H1 (cell line): ENCODE measurements at regions of chr7 and their contacts with region 1.

Region 1: GRCh38 chr7:101066141-101066832 is 19.0 kb upstream of the TRIM56 start:
- DNase-seq: no peak
- H3K4me3 ChIP-seq: no peak overlapping the region
- H3K27ac ChIP-seq: no peak overlapping the region
- H3K4me1 ChIP-seq: peaks cover 0 to 11% (median 8%) of the 10 kb centered on the region in 4 experiments; a peak in 5 of 7 replicates
- H3K27me3 ChIP-seq: no peaks in the 10 kb centered on the region
- CTCF ChIP-seq: no peak
- EP300 ChIP-seq: no peak
- POLR2A ChIP-seq: no peak
- RAD21 ChIP-seq: no peak

Region 2: DNA sequence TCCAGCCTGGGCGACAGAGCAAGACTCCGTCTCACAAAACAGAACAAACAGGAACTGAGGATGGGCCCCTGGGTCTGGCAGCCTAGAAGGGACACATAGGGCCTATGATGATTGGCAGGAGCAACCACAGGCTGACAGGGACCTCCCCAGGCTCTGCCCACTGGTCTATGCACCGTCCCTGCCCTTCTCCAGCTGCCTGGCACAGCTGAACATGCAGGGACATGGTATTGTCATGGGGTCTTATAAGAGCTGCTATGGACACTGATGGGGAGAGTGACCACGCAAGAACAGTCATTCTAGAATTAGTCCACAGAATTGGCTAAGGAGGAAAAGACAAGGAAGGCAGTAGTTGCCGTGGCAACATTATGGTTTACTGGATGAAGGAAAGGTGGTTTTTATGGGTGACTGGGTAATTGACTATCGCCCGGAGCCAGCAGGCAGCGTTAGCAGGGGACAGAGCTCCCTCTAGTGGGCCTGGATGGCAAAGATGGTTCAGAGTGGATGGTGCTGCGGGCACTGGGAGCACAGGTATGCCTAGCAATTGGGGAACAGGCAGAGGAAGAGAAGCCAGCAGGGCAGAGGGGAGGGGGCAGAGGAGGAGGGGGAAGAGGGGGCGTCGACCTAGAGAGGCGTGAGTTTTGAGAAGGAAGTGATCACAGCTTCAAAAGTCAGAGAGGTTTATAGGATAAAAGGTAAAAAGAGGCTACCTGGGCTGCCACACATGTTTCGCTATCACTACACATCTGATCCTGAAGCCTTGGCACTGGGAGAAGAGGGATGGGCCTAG is 11.2 kb after region 1 on chr7:
- CTCF ChIA-PET with region 1: interaction called, 11 read pairs
- POLR2A ChIA-PET with region 1: no interaction called
- DNase-seq: peak; percentile 89 to 98
- H3K4me3 ChIP-seq: no peak overlapping the region
- H3K27ac ChIP-seq: no peak overlapping the region
- H3K4me1 ChIP-seq: no peaks in the 10 kb centered on the region
- H3K27me3 ChIP-seq: no peaks in the 10 kb centered on the region
- CTCF ChIP-seq: peak; percentile 94 to 98 (median 96)
- EP300 ChIP-seq: peak in 1 of 2 experiments; percentile 54; a peak in 1 of 3 replicates
- POLR2A ChIP-seq: no peak
- RAD21 ChIP-seq: peak; percentile 97

Region 3: DNA sequence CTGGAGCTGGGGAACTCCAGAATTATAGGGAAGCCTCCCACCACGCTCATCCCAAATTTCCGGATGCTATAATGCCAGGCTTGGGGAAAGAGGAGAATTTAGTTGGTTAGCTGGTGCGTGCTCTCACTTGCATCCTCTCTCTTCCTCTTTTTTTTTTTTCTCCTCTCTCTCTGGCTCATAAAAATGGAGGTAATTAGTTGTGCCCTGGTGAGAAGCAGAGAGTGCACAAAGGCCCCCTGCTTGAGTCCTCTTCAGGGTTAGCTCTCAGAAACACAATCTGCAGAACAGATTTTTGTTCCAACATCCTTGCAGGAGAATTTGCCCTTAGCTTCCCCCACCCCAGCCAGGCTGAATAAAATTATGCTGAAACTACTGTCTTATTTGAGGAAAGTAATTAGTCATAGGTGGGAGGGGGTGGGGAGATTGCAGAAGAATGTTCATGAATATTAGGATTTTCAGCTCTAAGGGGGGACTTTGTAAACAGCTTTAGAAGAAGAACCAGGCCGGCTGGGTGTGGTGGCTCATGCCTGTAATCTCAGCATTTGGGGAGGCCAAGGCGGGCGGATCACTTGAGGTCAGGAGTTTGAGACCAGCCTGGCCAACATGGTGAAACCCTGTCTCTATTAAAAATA is 68.2 kb after region 1 on chr7:
- CTCF ChIA-PET with region 1: no interaction called
- POLR2A ChIA-PET with region 1: no interaction called
- DNase-seq: no peak
- H3K4me3 ChIP-seq: no peak overlapping the region; a peak in 2 of 8 replicates
- H3K27ac ChIP-seq: no peak overlapping the region
- H3K4me1 ChIP-seq: peaks cover 2 to 14% (median 6%) of the 10 kb centered on the region in 4 experiments; a peak in 6 of 7 replicates
- H3K27me3 ChIP-seq: peaks cover 0 to 2% (median 0%) of the 10 kb centered on the region in 4 experiments; a peak in 1 of 7 replicates
- CTCF ChIP-seq: no peak
- EP300 ChIP-seq: no peak
- POLR2A ChIP-seq: no peak
- RAD21 ChIP-seq: no peak